B cell (primary cell): ENCODE measurements at regions of chr2 and their contacts with region 1.

Region 1: GRCh38 chr2:65554765-65555591 is 122.6 kb upstream of the SPRED2 start:
- DNase-seq: peak; percentile 19
- ATAC-seq: peak; percentile 45
- H3K4me3 ChIP-seq: no peak overlapping the region
- H3K4me3 Mint-ChIP-seq: peak overlapping the region; percentile 26
- H3K27ac ChIP-seq: no peak overlapping the region
- H3K27ac Mint-ChIP-seq: peak overlapping the region; percentile 59
- H3K4me1 ChIP-seq: peaks cover 10 to 21% of the 10 kb centered on the region in 2 donors
- H3K4me1 Mint-ChIP-seq: peaks cover 22% of the 10 kb centered on the region
- H3K27me3 ChIP-seq: no peaks in the 10 kb centered on the region
- H3K27me3 Mint-ChIP-seq: peaks cover 7% of the 10 kb centered on the region
- CTCF ChIP-seq: no peak

Region 2: DNA sequence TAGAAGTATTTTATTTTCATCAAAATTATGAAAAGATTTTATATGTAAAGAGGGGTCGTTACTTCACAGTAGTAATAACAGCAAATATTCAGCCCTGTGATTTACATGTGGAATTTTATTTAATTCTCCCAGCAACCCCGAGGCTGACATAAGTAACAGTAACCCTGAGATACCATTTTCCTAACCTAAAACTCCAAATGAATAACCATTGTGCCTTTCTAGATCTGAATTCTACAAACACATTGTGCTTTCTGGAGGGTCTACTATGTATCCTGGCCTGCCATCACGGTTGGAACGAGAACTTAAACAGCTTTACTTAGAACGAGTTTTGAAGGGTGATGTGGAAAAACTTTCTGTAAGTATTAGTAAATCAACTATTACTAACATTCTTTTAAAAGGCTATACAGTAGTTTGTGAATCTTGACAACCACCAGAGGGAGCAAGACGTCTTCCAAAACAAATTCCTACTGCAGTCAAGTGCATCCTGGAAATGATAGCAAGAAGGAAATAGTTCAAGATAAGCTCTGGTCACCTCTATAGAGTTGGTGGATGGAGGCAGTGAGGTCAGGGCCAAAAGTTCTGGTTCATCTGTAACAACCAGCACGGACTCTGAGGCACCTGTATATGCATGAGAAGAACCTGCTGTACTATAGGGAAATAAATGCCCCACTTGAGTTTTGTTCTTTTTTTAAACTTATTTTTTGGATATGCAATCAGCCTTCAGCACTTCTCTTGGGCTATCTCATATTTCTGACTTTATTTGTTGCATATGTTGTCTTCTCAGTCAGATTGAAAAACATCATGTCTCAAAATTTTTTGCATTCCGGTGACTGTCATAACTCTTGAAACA is 289.9 kb before region 1 on chr2:
- CTCF ChIA-PET with region 1: interaction called, 17 read pairs
- POLR2A ChIA-PET with region 1: no interaction called
- intact Hi-C with region 1: loop called (anchors 1 kb)
- DNase-seq: peak; percentile 62
- ATAC-seq: no peak
- H3K4me3 ChIP-seq: no peak overlapping the region
- H3K4me3 Mint-ChIP-seq: no peak overlapping the region
- H3K27ac ChIP-seq: no peak overlapping the region
- H3K27ac Mint-ChIP-seq: no peak overlapping the region
- H3K4me1 ChIP-seq: no peaks in the 10 kb centered on the region
- H3K4me1 Mint-ChIP-seq: peaks cover 2% of the 10 kb centered on the region
- H3K27me3 ChIP-seq: no peaks in the 10 kb centered on the region
- H3K27me3 Mint-ChIP-seq: no peaks in the 10 kb centered on the region
- CTCF ChIP-seq: peak; percentile 82

Region 3: GRCh38 chr2:65300761-65301711 is 253.9 kb before region 1 on chr2:
- CTCF ChIA-PET with region 1: no interaction called
- POLR2A ChIA-PET with region 1: no interaction called
- intact Hi-C with region 1: no loop called
- DNase-seq: peak; percentile 54
- ATAC-seq: peak; percentile 79
- H3K4me3 ChIP-seq: peak overlapping the region in 3 of 5 experiments; percentile 33 to 45 (median 38)
- H3K4me3 Mint-ChIP-seq: peak overlapping the region; percentile 78
- H3K27ac ChIP-seq: no peak overlapping the region
- H3K27ac Mint-ChIP-seq: peak overlapping the region; percentile 56
- H3K4me1 ChIP-seq: peaks cover 24 to 27% of the 10 kb centered on the region in 2 donors
- H3K4me1 Mint-ChIP-seq: peaks cover 23% of the 10 kb centered on the region
- H3K27me3 ChIP-seq: peaks cover 0 to 8% (median 0%) of the 10 kb centered on the region in 4 experiments
- H3K27me3 Mint-ChIP-seq: peaks cover 12% of the 10 kb centered on the region
- CTCF ChIP-seq: no peak

Region 4: GRCh38 chr2:65320042-65320725 is 234.8 kb before region 1 on chr2:
- CTCF ChIA-PET with region 1: no interaction called
- POLR2A ChIA-PET with region 1: no interaction called
- intact Hi-C with region 1: no loop called
- DNase-seq: no peak
- ATAC-seq: no peak
- H3K4me3 ChIP-seq: no peak overlapping the region
- H3K4me3 Mint-ChIP-seq: no peak overlapping the region
- H3K27ac ChIP-seq: no peak overlapping the region
- H3K27ac Mint-ChIP-seq: no peak overlapping the region
- H3K4me1 ChIP-seq: peaks cover 7 to 10% of the 10 kb centered on the region in 2 donors
- H3K4me1 Mint-ChIP-seq: peaks cover 7% of the 10 kb centered on the region
- H3K27me3 ChIP-seq: peaks cover 0 to 6% (median 3%) of the 10 kb centered on the region in 4 experiments
- H3K27me3 Mint-ChIP-seq: peaks cover 21% of the 10 kb centered on the region
- CTCF ChIP-seq: no peak

Region 5: GRCh38 chr2:65382776-65383357 is 172.1 kb before region 1 on chr2:
- CTCF ChIA-PET with region 1: no interaction called
- POLR2A ChIA-PET with region 1: no interaction called
- intact Hi-C with region 1: loop called (anchors 2 kb)
- DNase-seq: peak; percentile 69
- ATAC-seq: peak; percentile 80
- H3K4me3 ChIP-seq: peak overlapping the region in 1 of 5 experiments; percentile 42
- H3K4me3 Mint-ChIP-seq: peak overlapping the region; percentile 76
- H3K27ac ChIP-seq: peak overlapping the region in 1 of 2 donors; percentile 59
- H3K27ac Mint-ChIP-seq: peak overlapping the region; percentile 51
- H3K4me1 ChIP-seq: peaks cover 26 to 33% of the 10 kb centered on the region in 2 donors
- H3K4me1 Mint-ChIP-seq: peaks cover 30% of the 10 kb centered on the region
- H3K27me3 ChIP-seq: peaks cover 0 to 10% (median 0%) of the 10 kb centered on the region in 4 experiments
- H3K27me3 Mint-ChIP-seq: peaks cover 7% of the 10 kb centered on the region
- CTCF ChIP-seq: no peak

Region 6: GRCh38 chr2:65544895-65545294 is 10.1 kb before region 1 on chr2:
- CTCF ChIA-PET with region 1: no interaction called
- POLR2A ChIA-PET with region 1: no interaction called
- intact Hi-C with region 1: no loop called
- DNase-seq: no peak
- ATAC-seq: no peak
- H3K4me3 ChIP-seq: no peak overlapping the region
- H3K4me3 Mint-ChIP-seq: no peak overlapping the region
- H3K27ac ChIP-seq: no peak overlapping the region
- H3K27ac Mint-ChIP-seq: no peak overlapping the region
- H3K4me1 ChIP-seq: peaks cover 0 to 4% of the 10 kb centered on the region in 2 donors
- H3K4me1 Mint-ChIP-seq: peaks cover 7% of the 10 kb centered on the region
- H3K27me3 ChIP-seq: no peaks in the 10 kb centered on the region
- H3K27me3 Mint-ChIP-seq: peaks cover 12% of the 10 kb centered on the region
- CTCF ChIP-seq: no peak

Region 7: DNA sequence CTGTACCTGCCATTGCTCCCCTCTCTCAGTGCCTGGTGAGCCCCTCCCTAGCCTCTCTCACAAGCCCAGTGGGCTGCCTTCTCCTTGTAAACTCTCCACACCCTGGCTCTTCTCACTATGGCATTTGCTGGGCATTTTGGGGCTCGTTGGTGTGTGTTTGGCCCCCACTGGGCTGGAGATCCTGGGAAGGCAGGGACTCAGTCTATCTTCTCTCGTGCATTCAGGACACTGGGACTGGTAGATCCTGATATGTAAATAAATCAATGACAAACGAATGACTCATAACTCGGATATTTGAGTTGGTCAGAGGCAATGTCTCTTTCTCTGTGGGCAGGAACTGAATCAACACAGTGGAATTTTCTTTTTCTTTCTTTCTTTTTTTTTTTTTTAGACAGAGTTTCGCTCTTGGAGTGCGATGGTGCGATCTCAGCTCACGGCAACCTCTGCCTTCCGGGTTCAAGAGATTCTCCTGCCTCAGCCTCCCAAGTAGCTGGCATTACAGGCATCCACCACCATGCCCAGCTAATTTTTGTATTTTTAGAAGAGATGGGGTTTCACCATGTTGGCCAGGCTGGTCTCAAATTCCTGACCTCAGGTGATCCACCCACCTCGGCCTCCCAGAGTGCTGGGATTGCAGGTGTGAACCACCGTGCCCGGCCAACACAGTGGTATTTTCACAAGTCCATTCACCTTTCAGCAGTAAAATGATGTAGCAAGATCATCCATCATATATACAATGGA is 22.1 kb after region 1 on chr2:
- CTCF ChIA-PET with region 1: interaction called, 5 read pairs
- POLR2A ChIA-PET with region 1: no interaction called
- intact Hi-C with region 1: loop called (anchors 1 kb)
- DNase-seq: no peak
- ATAC-seq: no peak
- H3K4me3 ChIP-seq: no peak overlapping the region
- H3K4me3 Mint-ChIP-seq: no peak overlapping the region
- H3K27ac ChIP-seq: no peak overlapping the region
- H3K27ac Mint-ChIP-seq: no peak overlapping the region
- H3K4me1 ChIP-seq: peaks cover 0 to 2% of the 10 kb centered on the region in 2 donors
- H3K4me1 Mint-ChIP-seq: peaks cover 6% of the 10 kb centered on the region
- H3K27me3 ChIP-seq: no peaks in the 10 kb centered on the region
- H3K27me3 Mint-ChIP-seq: no peaks in the 10 kb centered on the region
- CTCF ChIP-seq: no peak